Heart left ventricle (tissue), 16 donors: ENCODE measurements at regions of chr1 and their contacts with region 1.

Region 1: GRCh38 chr1:59296358-59297256 is at the start of gene FGGY:
- DNase-seq: peak; percentile 98 to 99 (median 98)
- ATAC-seq: peak; percentile 94 to 97 (median 95)
- H3K4me3 ChIP-seq: peak within 1 kb of the TSS; percentile 8 to 81 (median 62)
- H3K27ac ChIP-seq: peak within 1 kb of the TSS; percentile 90 to 99 (median 96)
- H3K4me1 ChIP-seq: peaks cover 0 to 45% (median 18%) of the 10 kb centered on the region in 12 donors
- H3K27me3 ChIP-seq: no peaks in the 10 kb centered on the region
- CTCF ChIP-seq: no peak
- POLR2A ChIP-seq: peak; percentile 51 to 78
- total RNA-seq, gene FGGY: 20.8 to 42.9 (median 33.9) TPM

Region 2: GRCh38 chr1:58755468-58755872 is 541.1 kb before region 1 on chr1:
- intact Hi-C with region 1: loop called in 1 of 10 experiments (anchors 10 kb)
- DNase-seq: peak; percentile 45 to 79 (median 62)
- ATAC-seq: peak; percentile 69 to 95 (median 94)
- H3K4me3 ChIP-seq: peak overlapping the region in 2 of 12 donors; percentile 24 to 25
- H3K27ac ChIP-seq: peak overlapping the region in 11 of 12 donors; percentile 41 to 80 (median 71)
- H3K4me1 ChIP-seq: peaks cover 0 to 31% (median 11%) of the 10 kb centered on the region in 12 donors
- H3K27me3 ChIP-seq: no peaks in the 10 kb centered on the region
- CTCF ChIP-seq: no peak
- POLR2A ChIP-seq: no peak

Region 3: GRCh38 chr1:58903514-58904298 is 392.9 kb before region 1 on chr1:
- intact Hi-C with region 1: loop called in 8 of 10 experiments (anchors 5 to 10 kb)
- DNase-seq: peak; percentile 95 to 98 (median 97)
- ATAC-seq: peak; percentile 90 to 97 (median 96)
- H3K4me3 ChIP-seq: peak overlapping the region; percentile 11 to 69 (median 60)
- H3K27ac ChIP-seq: peak overlapping the region; percentile 95 to 99 (median 97)
- H3K4me1 ChIP-seq: peaks cover 0 to 45% (median 21%) of the 10 kb centered on the region in 12 donors
- H3K27me3 ChIP-seq: no peaks in the 10 kb centered on the region
- CTCF ChIP-seq: peak in 2 of 12 donors; percentile 7 to 33
- POLR2A ChIP-seq: peak in 1 of 2 donors; percentile 90

Region 4: DNA sequence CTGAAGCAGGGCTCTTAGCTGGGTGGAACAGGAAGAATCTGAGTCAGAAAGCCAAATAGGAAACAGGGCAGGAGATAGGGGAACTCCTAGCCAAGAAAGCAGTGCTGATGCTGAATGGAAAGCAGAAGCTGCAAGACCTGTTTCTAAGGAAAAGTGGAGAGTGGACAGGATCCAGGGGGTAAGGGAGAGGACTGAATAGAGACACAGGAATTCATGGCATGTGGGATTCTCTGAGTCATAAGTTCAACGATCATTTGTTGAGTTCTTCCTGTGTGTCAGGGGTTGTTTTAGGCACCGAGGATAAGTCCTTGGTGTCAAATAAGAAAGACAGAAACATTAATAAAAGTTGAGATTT is 153.5 kb before region 1 on chr1:
- intact Hi-C with region 1: loop called in 3 of 10 experiments (anchors 5 kb)
- DNase-seq: peak in 2 of 5 donors; percentile 23 to 41
- ATAC-seq: peak in 3 of 4 donors; percentile 25 to 43 (median 32)
- H3K4me3 ChIP-seq: no peak overlapping the region
- H3K27ac ChIP-seq: peak overlapping the region in 10 of 12 donors; percentile 2 to 91 (median 80)
- H3K4me1 ChIP-seq: peaks cover 6 to 74% (median 55%) of the 10 kb centered on the region in 12 donors
- H3K27me3 ChIP-seq: no peaks in the 10 kb centered on the region
- CTCF ChIP-seq: no peak
- POLR2A ChIP-seq: no peak

Region 5: DNA sequence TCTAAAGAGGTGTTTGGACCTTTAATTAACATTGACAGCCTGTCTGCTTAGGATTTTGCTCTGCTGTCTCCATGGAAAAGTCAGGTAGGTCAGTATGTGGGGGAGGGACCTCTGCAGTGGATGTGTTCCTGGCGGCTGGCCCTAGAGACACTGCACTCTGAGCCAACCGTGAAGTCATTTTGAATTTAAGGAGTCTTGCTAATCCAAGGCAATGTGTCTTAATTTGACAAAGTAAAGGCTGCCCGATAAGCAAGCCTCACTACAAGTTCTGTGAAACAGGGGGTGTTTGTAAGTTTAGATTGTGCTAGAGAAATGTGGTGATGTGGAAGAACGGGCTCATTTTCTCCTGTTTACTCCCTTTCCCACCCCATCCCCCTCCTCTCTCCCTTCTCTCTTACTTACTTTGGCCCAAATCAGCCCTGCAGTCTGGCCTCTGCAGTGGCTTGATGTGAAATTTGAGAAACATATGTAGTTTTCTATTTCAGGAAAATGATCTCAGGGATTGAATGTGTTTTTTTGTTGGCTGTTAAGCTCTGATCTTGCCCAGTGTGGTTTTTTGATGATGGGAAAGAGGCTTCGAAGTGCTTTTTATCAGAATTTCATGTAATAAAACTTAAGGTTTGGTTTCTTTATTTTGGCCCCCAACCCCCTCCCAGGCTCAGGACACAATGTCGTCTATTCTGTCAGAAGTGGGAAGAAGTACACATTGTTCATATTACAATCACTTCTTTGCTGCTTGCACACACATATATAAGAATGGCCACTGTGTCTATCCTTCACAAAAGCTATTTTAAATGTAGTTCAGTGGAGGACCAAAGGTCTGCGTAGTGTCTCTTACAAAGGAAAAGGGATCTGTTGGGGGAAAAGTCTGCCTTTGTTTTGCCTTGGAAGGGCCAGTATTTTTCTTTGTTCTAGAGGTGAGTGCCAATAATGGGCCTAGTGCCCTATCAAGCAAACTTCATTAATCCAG is 96.9 kb after region 1 on chr1:
- intact Hi-C with region 1: loop called in 6 of 10 experiments (anchors 1 to 10 kb)
- DNase-seq: peak; percentile 76 to 87 (median 85)
- ATAC-seq: peak; percentile 96 to 98 (median 98)
- H3K4me3 ChIP-seq: peak overlapping the region in 3 of 12 donors; percentile 4 to 10 (median 5)
- H3K27ac ChIP-seq: peak overlapping the region; percentile 67 to 95 (median 88)
- H3K4me1 ChIP-seq: peaks cover 0 to 39% (median 24%) of the 10 kb centered on the region in 12 donors
- H3K27me3 ChIP-seq: no peaks in the 10 kb centered on the region
- CTCF ChIP-seq: no peak
- POLR2A ChIP-seq: no peak

Region 6: DNA sequence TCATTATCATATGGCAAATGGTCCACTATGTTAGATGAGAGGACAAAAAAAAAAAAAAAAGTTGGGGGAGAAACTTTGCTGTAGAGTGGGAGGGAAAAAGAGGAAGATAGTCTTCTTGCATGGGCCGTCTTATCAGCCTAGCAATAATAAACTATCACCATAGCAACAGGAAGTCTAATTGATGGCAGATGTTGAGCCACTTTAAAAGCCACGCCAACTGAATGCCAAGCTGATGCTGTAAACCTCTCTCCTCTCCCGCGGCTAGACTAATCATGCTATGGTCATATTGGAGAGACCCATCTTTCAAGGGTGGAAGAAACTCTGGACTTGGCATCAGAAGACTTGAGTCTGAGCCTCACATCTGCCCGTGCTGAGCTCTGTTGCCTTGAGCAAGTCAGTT is 396.0 kb after region 1 on chr1:
- intact Hi-C with region 1: loop called in 7 of 10 experiments (anchors 5 to 10 kb)
- DNase-seq: peak in 1 of 5 donors; percentile 30
- ATAC-seq: peak in 3 of 4 donors; percentile 37 to 69 (median 60)
- H3K4me3 ChIP-seq: no peak overlapping the region
- H3K27ac ChIP-seq: no peak overlapping the region
- H3K4me1 ChIP-seq: peaks cover 0 to 44% (median 4%) of the 10 kb centered on the region in 12 donors
- H3K27me3 ChIP-seq: no peaks in the 10 kb centered on the region
- CTCF ChIP-seq: no peak
- POLR2A ChIP-seq: no peak